Transverse colon (tissue), 4 donors: ENCODE measurements at regions of chr11 and their contacts with region 1.

Region 1: DNA sequence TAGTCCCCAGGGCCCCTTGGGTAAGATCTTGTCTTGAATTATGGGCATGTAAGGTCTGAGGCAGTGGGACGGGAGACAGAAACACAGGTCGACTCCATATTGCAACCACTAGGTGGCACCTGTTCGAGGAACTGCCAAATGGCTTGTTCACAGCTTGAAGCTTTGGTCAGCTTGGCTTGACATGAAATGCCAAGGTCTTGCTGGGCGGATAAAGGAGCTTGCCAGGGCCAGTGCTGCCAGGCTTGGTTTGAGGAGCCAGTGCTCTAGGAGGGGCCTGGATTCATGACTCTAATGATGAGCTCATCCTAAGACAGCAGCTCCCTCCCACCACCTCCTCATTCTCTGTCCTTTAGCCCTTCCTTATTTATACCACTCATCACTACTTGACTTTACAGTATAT is 11.9 kb upstream of the NRIP3 start:
- DNase-seq: peak; percentile 66
- H3K4me3 ChIP-seq: no peak overlapping the region
- H3K27ac ChIP-seq: no peak overlapping the region
- H3K4me1 ChIP-seq: peaks cover 0 to 8% (median 0%) of the 10 kb centered on the region in 4 donors
- H3K27me3 ChIP-seq: no peaks in the 10 kb centered on the region
- CTCF ChIP-seq: peak; percentile 73 to 81 (median 78)
- EP300 ChIP-seq: no peak
- POLR2A ChIP-seq: no peak

Region 2: GRCh38 chr11:9030601-9031000 is 14.9 kb after region 1 on chr11:
- in situ Hi-C with region 1: no loop called
- intact Hi-C with region 1: no loop called
- DNase-seq: no peak
- H3K4me3 ChIP-seq: no peak overlapping the region
- H3K27ac ChIP-seq: no peak overlapping the region
- H3K4me1 ChIP-seq: no peaks in the 10 kb centered on the region
- H3K27me3 ChIP-seq: no peaks in the 10 kb centered on the region
- CTCF ChIP-seq: no peak
- EP300 ChIP-seq: no peak
- POLR2A ChIP-seq: no peak

Region 3: GRCh38 chr11:9092853-9093778 is 77.4 kb after region 1 on chr11:
- in situ Hi-C with region 1: no loop called
- intact Hi-C with region 1: loop called (anchors 5 kb)
- DNase-seq: no peak
- H3K4me3 ChIP-seq: no peak overlapping the region
- H3K27ac ChIP-seq: no peak overlapping the region
- H3K4me1 ChIP-seq: peaks cover 0 to 29% (median 13%) of the 10 kb centered on the region in 4 donors
- H3K27me3 ChIP-seq: peaks cover 9% of the 10 kb centered on the region
- CTCF ChIP-seq: peak in 2 of 5 experiments; percentile 2 to 7
- EP300 ChIP-seq: no peak
- POLR2A ChIP-seq: no peak

Region 4: DNA sequence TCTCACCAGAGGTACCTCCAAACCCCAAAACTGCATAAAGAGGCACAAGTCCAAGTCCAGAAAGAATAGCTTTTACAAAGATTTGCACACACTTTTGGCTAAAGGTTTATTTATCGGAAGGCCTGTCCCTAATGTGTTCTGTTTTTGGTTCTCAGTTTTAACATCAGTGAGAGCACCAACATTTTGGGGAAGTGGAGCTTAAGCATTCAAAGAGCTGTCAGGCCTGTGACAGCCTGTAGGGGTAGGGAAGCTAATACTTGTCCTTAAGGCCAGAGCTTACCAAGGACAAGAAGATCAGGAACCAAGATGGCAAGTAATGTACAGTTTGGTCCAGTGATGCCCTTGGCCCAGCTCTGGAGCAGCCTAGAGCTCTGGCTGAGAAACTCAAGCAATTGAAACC is 114.6 kb after region 1 on chr11:
- in situ Hi-C with region 1: loop called (anchors 5 to 25 kb)
- intact Hi-C with region 1: loop called (anchors 5 kb)
- DNase-seq: no peak
- H3K4me3 ChIP-seq: no peak overlapping the region
- H3K27ac ChIP-seq: no peak overlapping the region
- H3K4me1 ChIP-seq: peaks cover 0 to 3% (median 0%) of the 10 kb centered on the region in 4 donors
- H3K27me3 ChIP-seq: no peaks in the 10 kb centered on the region
- CTCF ChIP-seq: no peak
- EP300 ChIP-seq: no peak
- POLR2A ChIP-seq: no peak

Region 5: GRCh38 chr11:9137293-9138132 is 121.8 kb after region 1 on chr11:
- in situ Hi-C with region 1: loop called (anchors 5 to 25 kb)
- intact Hi-C with region 1: loop called (anchors 5 kb)
- DNase-seq: peak; percentile 83
- H3K4me3 ChIP-seq: no peak overlapping the region
- H3K27ac ChIP-seq: peak overlapping the region in 1 of 4 donors; percentile 24
- H3K4me1 ChIP-seq: peaks cover 0 to 24% (median 15%) of the 10 kb centered on the region in 4 donors
- H3K27me3 ChIP-seq: no peaks in the 10 kb centered on the region
- CTCF ChIP-seq: peak; percentile 92 to 95 (median 94)
- EP300 ChIP-seq: no peak
- POLR2A ChIP-seq: no peak

Region 6: DNA sequence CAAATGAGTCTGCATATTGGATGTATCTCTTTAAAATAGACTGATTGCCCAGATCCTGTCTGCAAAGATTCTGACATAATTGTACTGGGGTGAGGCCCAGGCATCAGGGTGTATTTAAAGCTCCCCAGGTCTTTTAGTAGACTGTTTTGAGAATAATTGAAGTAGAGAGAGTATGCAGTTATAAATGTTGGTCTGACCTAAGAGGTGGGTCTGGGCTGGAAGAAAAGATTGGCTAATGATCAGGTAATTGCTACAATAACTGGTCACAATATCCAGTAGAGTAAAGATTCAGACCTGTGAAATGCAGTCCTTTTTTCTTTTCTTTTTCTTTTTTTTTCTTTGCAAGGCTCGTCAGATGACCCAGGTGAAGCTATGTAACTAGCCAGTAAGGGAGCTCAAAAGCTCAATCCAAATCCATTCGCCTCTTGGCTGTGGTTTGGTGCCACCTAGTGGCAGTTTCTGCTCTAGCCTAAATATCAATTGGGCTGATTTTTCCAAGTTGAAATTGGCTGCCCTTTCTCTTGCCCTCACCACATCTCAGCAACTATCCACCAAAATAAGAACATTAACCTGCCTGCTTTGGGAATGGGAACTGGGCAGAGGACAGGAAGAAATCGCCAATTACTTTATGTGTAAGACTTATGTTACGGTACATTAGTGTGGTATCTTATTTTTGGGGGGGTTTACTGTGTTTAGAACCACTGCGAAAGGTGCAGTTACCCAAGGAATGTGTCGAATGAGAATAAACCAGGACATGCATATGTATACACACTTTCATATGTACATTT is 491.0 kb after region 1 on chr11:
- in situ Hi-C with region 1: loop called in 1 of 4 experiments (anchors 25 kb)
- intact Hi-C with region 1: no loop called
- DNase-seq: peak; percentile 82
- H3K4me3 ChIP-seq: no peak overlapping the region
- H3K27ac ChIP-seq: no peak overlapping the region
- H3K4me1 ChIP-seq: peaks cover 0 to 9% (median 6%) of the 10 kb centered on the region in 4 donors
- H3K27me3 ChIP-seq: no peaks in the 10 kb centered on the region
- CTCF ChIP-seq: peak; percentile 83 to 97 (median 92)
- EP300 ChIP-seq: no peak
- POLR2A ChIP-seq: no peak